GM12878 (cell line): ENCODE measurements at regions of chr5 and their contacts with region 1.

Region 1: GRCh38 chr5:153998010-153998409 is 40.7 kb downstream of the FAM114A2 start:
- DNase-seq: no peak
- ATAC-seq: no peak
- H3K4me3 ChIP-seq: no peak overlapping the region
- H3K27ac ChIP-seq: no peak overlapping the region
- H3K4me1 ChIP-seq: no peaks in the 10 kb centered on the region
- H3K27me3 ChIP-seq: no peaks in the 10 kb centered on the region
- CTCF ChIP-seq: no peak
- EP300 ChIP-seq: no peak
- POLR2A ChIP-seq: no peak
- RAD21 ChIP-seq: no peak

Region 2: GRCh38 chr5:153678617-153679329 is 319.2 kb before region 1 on chr5:
- CTCF ChIA-PET with region 1: no interaction called
- POLR2A ChIA-PET with region 1: no interaction called
- RAD21 ChIA-PET with region 1: no interaction called
- SMC1A ChIA-PET with region 1: no interaction called
- in situ Hi-C with region 1: no loop called
- intact Hi-C with region 1: no loop called
- DNase-seq: no peak
- ATAC-seq: no peak
- H3K4me3 ChIP-seq: no peak overlapping the region
- H3K27ac ChIP-seq: no peak overlapping the region
- H3K4me1 ChIP-seq: no peaks in the 10 kb centered on the region
- H3K27me3 ChIP-seq: no peaks in the 10 kb centered on the region
- CTCF ChIP-seq: no peak
- EP300 ChIP-seq: no peak
- POLR2A ChIP-seq: no peak
- RAD21 ChIP-seq: no peak

Region 3: GRCh38 chr5:154740483-154740882 is 742.5 kb after region 1 on chr5:
- CTCF ChIA-PET with region 1: no interaction called
- POLR2A ChIA-PET with region 1: interaction called, 10 read pairs
- RAD21 ChIA-PET with region 1: no interaction called
- SMC1A ChIA-PET with region 1: no interaction called
- in situ Hi-C with region 1: no loop called
- intact Hi-C with region 1: no loop called
- DNase-seq: no peak
- ATAC-seq: no peak
- H3K4me3 ChIP-seq: no peak overlapping the region
- H3K27ac ChIP-seq: no peak overlapping the region
- H3K4me1 ChIP-seq: no peaks in the 10 kb centered on the region
- H3K27me3 ChIP-seq: no peaks in the 10 kb centered on the region
- CTCF ChIP-seq: no peak
- EP300 ChIP-seq: no peak
- POLR2A ChIP-seq: no peak
- RAD21 ChIP-seq: no peak